Activated T-helper 1 cell treated with anti-CD3 and anti-CD28 coated beads, Interleukin-12 subunit alpha, Interleukin-12 subunit beta, Interleukin-2, Interleukin-4 antibody, amounts not matched to agents 30 ng/mL and 10 ng/mL and 1 ng/mL, durations not matched to agents 14 hours and 24 hours and 36 hours (primary cell): ENCODE measurements at regions of chr3 and their contacts with region 1.

Region 1: GRCh38 chr3:14144423-14145075 is 19.7 kb downstream of the TMEM43 start:
- DNase-seq: peak; percentile 75
- H3K4me3 Mint-ChIP-seq: peak overlapping the region; percentile 64
- H3K27ac Mint-ChIP-seq: peak overlapping the region; percentile 93
- H3K4me1 Mint-ChIP-seq: peaks cover 59% of the 10 kb centered on the region
- H3K27me3 Mint-ChIP-seq: no peaks in the 10 kb centered on the region

Region 2: GRCh38 chr3:14082108-14082657 is 62.4 kb before region 1 on chr3:
- intact Hi-C with region 1: loop called (anchors 1 kb)
- DNase-seq: no peak
- H3K4me3 Mint-ChIP-seq: peak overlapping the region; percentile 9
- H3K27ac Mint-ChIP-seq: peak overlapping the region; percentile 45
- H3K4me1 Mint-ChIP-seq: peaks cover 8% of the 10 kb centered on the region
- H3K27me3 Mint-ChIP-seq: peaks cover 6% of the 10 kb centered on the region